Dorsolateral prefrontal cortex (tissue), 120 donors: ENCODE measurements at regions of chr2 and their contacts with region 1.

Region 1: DNA sequence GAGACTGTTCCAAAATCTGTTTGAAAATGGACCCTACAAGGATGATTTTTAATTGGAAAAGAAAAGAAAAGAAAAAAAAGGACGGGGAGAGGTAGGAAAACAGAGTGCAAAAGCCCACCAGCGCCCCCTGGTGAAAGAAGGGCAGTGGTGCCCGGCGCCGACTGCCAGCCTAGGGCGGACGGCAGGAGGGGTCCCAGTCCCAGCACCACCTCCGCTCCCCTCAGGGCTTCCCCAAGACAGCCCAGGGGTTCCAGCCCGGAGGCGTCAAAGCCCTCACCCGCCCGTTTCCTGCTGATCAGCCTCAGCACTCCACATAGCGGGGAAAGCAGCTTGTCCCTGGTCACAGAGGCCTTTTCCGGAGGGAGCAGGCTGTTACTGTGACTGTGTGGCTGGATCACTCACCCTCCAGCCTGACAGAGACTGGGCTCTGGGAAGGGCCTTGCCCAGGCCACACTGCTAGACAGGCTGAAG is 213.9 kb downstream of the TFCP2L1 start:
- DNase-seq: peak in 9 of 10 donors; percentile 50 to 80 (median 67)
- H3K4me3 ChIP-seq: no peak overlapping the region
- H3K27ac ChIP-seq: no peak overlapping the region
- H3K27me3 ChIP-seq: peaks cover 0 to 6% (median 0%) of the 10 kb centered on the region in 45 donors
- CTCF ChIP-seq: peak; percentile 76 to 98 (median 94)

Region 2: GRCh38 chr2:120699292-120699691 is 371.8 kb before region 1 on chr2:
- intact Hi-C with region 1: loop called (anchors 2 kb)
- DNase-seq: no peak
- H3K4me3 ChIP-seq: no peak overlapping the region
- H3K27ac ChIP-seq: no peak overlapping the region
- H3K27me3 ChIP-seq: peaks cover 0 to 24% (median 6%) of the 10 kb centered on the region in 45 donors
- CTCF ChIP-seq: no peak

Region 3: GRCh38 chr2:121442889-121443288 is 371.8 kb after region 1 on chr2:
- intact Hi-C with region 1: no loop called
- DNase-seq: no peak
- H3K4me3 ChIP-seq: no peak overlapping the region
- H3K27ac ChIP-seq: peak overlapping the region in 16 of 59 donors; percentile 3 to 69 (median 40)
- H3K27me3 ChIP-seq: no peaks in the 10 kb centered on the region
- CTCF ChIP-seq: no peak

Region 4: DNA sequence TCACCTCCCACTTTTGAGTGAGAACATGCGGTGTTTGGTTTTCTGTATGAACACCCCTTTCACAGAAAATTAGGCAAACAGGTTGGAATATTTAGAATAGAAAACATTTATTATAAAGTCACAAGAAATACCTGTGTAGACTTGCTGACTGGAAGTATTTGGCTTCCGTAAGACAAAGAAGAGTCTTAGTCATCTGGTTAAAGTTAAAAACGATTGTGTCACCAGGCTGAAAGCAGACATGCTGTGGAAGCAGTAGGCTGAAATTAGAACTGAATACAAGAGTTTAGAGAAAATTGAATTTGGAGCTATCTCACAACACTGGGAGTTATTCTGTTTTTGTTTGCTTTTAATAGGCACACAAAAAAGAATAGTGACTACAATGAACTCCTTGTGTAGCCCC is 594.4 kb after region 1 on chr2:
- intact Hi-C with region 1: no loop called
- DNase-seq: no peak
- H3K4me3 ChIP-seq: no peak overlapping the region
- H3K27ac ChIP-seq: no peak overlapping the region
- H3K27me3 ChIP-seq: no peaks in the 10 kb centered on the region
- CTCF ChIP-seq: no peak